ENCODE measurements at regions of chr11 and their contacts with region 1.

Region 1: GRCh38 chr11:64767344-64768299 is 7.8 kb upstream of the PYGM start:
- DNase-seq: peak in 1 of 2 experiments; percentile 95
- H3K4me3 ChIP-seq: no peak overlapping the region
- H3K27ac ChIP-seq: peak overlapping the region; percentile 0; the same call in 1 of the 2 replicates
- H3K4me1 ChIP-seq: peaks cover 20 to 41% (median 35%) of the 10 kb centered on the region in 4 experiments
- H3K27me3 ChIP-seq: no peaks in the 10 kb centered on the region; a peak in 1 of 7 replicates
- CTCF ChIP-seq: peak in 2 of 3 experiments; percentile 75 to 89; a peak in 3 of 4 replicates
- EP300 ChIP-seq: no peak
- POLR2A ChIP-seq: no peak; a peak in 1 of 3 replicates
- RAD21 ChIP-seq: peak; percentile 39 to 57

Region 2: DNA sequence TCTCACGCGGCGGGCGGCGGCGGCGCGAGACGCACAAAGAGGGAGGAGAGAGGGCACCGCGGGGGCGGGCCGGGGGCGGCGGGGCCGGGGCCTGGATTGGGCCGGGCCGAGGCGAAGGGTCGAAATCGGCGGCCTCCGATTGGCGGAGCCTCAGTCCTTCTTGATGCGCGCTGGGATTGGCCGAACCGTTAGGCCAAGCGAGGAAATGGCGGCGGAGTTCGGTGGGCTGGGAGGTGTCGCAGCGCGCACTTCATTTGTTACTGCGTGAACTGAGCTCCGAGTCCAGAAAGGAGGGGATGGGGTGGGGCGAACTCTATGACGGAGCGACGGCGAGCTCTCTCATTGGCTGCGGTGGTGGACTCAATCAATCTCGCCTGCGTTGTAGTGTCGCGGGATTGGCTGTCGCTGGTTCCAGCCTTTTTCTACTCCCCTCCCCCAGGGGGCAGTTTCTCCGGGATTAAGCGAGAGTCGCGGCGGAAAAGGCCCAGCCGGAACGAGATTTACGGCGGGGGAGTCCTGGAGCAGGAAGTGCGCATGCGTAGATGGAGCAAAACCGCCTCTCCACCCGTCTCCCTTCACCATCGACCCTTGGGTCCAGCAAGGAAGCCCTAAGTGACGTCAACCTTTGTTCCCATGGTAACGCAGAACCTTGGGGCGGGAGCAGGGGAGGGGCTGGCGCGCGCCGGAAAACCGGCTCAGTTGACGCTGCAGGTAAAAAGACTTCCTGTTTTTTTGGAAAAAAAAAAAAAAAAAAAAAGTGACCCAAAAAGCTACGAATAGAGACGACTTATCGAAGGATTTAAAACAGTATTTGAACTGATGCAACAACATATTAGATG is 11.1 kb after region 1 on chr11 and contains the start of gene SF1:
- CTCF ChIA-PET with region 1: interaction called, 35 read pairs
- POLR2A ChIA-PET with region 1: interaction called, 1,087 read pairs
- DNase-seq: peak; percentile 97 to 99
- H3K4me3 ChIP-seq: peak within 1 kb of the TSS; percentile 69 to 99 (median 95)
- H3K27ac ChIP-seq: peak within 1 kb of the TSS; percentile 93
- H3K4me1 ChIP-seq: peaks cover 2 to 6% (median 5%) of the 10 kb centered on the region in 4 experiments; a peak in 5 of 7 replicates
- H3K27me3 ChIP-seq: no peaks in the 10 kb centered on the region
- CTCF ChIP-seq: peak in 1 of 3 experiments; percentile 24; a peak in 1 of 4 replicates
- EP300 ChIP-seq: no peak
- POLR2A ChIP-seq: peak; percentile 93 to 94
- RAD21 ChIP-seq: no peak
- total RNA-seq, gene SF1: 353 and 365 TPM in 2 replicates